ENCODE measurements at regions of chr11 and their contacts with region 1.

Region 1: DNA sequence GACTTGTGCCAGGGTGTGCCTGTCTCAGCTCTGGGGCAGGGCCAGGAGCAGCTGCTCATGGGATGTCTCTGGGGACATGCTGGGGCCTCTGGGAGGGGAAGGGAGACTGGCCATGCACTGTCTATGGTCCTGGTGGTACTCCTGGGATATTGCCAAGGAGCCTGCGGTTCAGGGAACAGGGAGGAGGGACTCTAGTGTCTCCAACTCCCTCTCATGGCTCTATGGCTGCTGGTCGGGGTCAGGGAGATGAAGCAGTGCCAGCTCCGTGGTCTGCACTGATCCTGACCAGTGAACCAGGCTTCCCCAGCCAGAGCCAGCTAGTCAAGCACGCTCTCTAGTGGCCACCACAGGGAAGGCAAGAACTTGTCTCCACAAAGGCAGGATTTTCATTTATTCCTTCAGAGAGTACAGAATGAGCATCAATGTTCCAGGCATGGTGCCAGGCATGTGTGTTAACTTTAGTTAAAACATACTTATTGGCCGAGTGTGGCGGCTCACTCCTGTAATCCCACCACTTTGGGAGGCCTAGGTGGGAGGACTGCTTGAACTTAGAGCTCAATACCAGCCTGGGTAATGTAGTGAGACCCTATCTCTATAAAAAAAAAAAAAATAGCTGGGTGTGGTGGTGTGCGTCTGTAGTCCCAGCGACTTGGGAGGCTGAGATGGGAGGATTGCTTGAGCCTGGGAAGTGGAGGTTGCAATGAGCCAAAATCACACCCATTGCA is 2.5 kb upstream of the BEST1 start:
- DNase-seq: peak; percentile 81 to 89
- ATAC-seq: peak; percentile 77 to 85 (median 83)
- H3K4me3 ChIP-seq: no peak overlapping the region
- H3K27ac ChIP-seq: peak overlapping the region in 2 of 10 donors; percentile 17 to 25
- H3K4me1 ChIP-seq: peaks cover 0 to 34% (median 9%) of the 10 kb centered on the region in 9 donors
- H3K27me3 ChIP-seq: no peaks in the 10 kb centered on the region
- CTCF ChIP-seq: peak; percentile 90 to 98 (median 94)

Region 2: DNA sequence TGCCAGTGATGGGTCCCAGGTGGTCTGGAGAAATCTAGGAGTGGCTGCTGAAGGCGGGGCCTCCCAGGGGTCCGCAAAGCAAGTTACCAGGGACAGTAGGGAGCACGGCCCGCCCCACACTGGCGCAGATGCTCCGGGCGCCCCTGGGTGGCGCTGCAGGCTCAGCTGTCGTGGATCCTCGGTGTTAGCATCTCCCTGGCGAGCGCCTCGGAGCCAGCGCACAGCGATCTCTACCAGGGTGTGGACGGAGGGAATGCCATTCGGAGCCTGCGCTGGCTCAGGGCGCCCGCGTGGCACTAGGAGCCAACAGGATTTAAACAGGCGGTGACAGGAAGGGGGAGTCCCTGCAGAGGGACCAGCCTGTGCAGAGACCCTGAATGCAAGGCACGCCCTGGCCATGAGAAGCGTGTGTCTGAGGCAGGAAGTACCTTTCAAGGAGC is 76.5 kb before region 1 on chr11:
- intact Hi-C with region 1: loop called in 6 of 10 experiments (anchors 1 to 2 kb)
- DNase-seq: peak; percentile 79 to 87
- ATAC-seq: peak; percentile 82 to 91 (median 88)
- H3K4me3 ChIP-seq: peak overlapping the region in 4 of 10 donors; percentile 10 to 40 (median 25)
- H3K27ac ChIP-seq: peak overlapping the region in 9 of 10 donors; percentile 5 to 72 (median 53)
- H3K4me1 ChIP-seq: peaks cover 6 to 51% (median 31%) of the 10 kb centered on the region in 9 donors
- H3K27me3 ChIP-seq: no peaks in the 10 kb centered on the region
- CTCF ChIP-seq: peak; percentile 92 to 98 (median 94)

Region 3: GRCh38 chr11:61899146-61899841 is 48.4 kb before region 1 on chr11:
- intact Hi-C with region 1: loop called in 9 of 10 experiments (anchors 1 to 5 kb)
- DNase-seq: peak; percentile 84 to 88
- ATAC-seq: peak; percentile 67 to 87 (median 82)
- H3K4me3 ChIP-seq: no peak overlapping the region
- H3K27ac ChIP-seq: peak overlapping the region in 6 of 10 donors; percentile 2 to 61 (median 42)
- H3K4me1 ChIP-seq: peaks cover 0 to 22% (median 10%) of the 10 kb centered on the region in 9 donors
- H3K27me3 ChIP-seq: no peaks in the 10 kb centered on the region
- CTCF ChIP-seq: peak; percentile 98 to 100 (median 100)

Region 4: GRCh38 chr11:61908730-61909315 is 38.8 kb before region 1 on chr11:
- intact Hi-C with region 1: loop called in 2 of 10 experiments (anchors 5 kb)
- DNase-seq: peak; percentile 64 to 66
- ATAC-seq: peak in 7 of 8 donors; percentile 5 to 62 (median 30)
- H3K4me3 ChIP-seq: no peak overlapping the region
- H3K27ac ChIP-seq: peak overlapping the region in 7 of 10 donors; percentile 7 to 74 (median 52)
- H3K4me1 ChIP-seq: peaks cover 10 to 56% (median 32%) of the 10 kb centered on the region in 9 donors
- H3K27me3 ChIP-seq: no peaks in the 10 kb centered on the region
- CTCF ChIP-seq: no peak

Region 5: GRCh38 chr11:62004473-62004872 is 56.8 kb after region 1 on chr11:
- intact Hi-C with region 1: no loop called
- DNase-seq: peak in 1 of 2 donors; percentile 21
- ATAC-seq: peak; percentile 21 to 85 (median 56)
- H3K4me3 ChIP-seq: no peak overlapping the region
- H3K27ac ChIP-seq: peak overlapping the region in 1 of 10 donors; percentile 74
- H3K4me1 ChIP-seq: peaks cover 0 to 26% (median 3%) of the 10 kb centered on the region in 9 donors
- H3K27me3 ChIP-seq: no peaks in the 10 kb centered on the region
- CTCF ChIP-seq: no peak

Region 6: GRCh38 chr11:62081378-62082291 is 134.0 kb after region 1 on chr11:
- intact Hi-C with region 1: loop called in 9 of 10 experiments (anchors 1 to 10 kb)
- DNase-seq: peak; percentile 74 to 79
- ATAC-seq: peak; percentile 59 to 92 (median 86)
- H3K4me3 ChIP-seq: no peak overlapping the region
- H3K27ac ChIP-seq: peak overlapping the region in 1 of 10 donors; percentile 16
- H3K4me1 ChIP-seq: peaks cover 0 to 15% (median 0%) of the 10 kb centered on the region in 9 donors
- H3K27me3 ChIP-seq: no peaks in the 10 kb centered on the region
- CTCF ChIP-seq: peak; percentile 86 to 98 (median 94)

Region 7: GRCh38 chr11:62360685-62361084 is 413.0 kb after region 1 on chr11:
- intact Hi-C with region 1: no loop called
- DNase-seq: no peak
- ATAC-seq: peak in 3 of 8 donors; percentile 35 to 47 (median 37)
- H3K4me3 ChIP-seq: peak overlapping the region in 5 of 10 donors; percentile 11 to 32 (median 24)
- H3K27ac ChIP-seq: peak overlapping the region in 7 of 10 donors; percentile 28 to 74 (median 52)
- H3K4me1 ChIP-seq: no peaks in the 10 kb centered on the region
- H3K27me3 ChIP-seq: no peaks in the 10 kb centered on the region
- CTCF ChIP-seq: no peak

Measured in heart right ventricle (tissue), 16 donors.